Mammary epithelial cell (primary cell): ENCODE measurements at regions of chr3 and their contacts with region 1.

Region 1: DNA sequence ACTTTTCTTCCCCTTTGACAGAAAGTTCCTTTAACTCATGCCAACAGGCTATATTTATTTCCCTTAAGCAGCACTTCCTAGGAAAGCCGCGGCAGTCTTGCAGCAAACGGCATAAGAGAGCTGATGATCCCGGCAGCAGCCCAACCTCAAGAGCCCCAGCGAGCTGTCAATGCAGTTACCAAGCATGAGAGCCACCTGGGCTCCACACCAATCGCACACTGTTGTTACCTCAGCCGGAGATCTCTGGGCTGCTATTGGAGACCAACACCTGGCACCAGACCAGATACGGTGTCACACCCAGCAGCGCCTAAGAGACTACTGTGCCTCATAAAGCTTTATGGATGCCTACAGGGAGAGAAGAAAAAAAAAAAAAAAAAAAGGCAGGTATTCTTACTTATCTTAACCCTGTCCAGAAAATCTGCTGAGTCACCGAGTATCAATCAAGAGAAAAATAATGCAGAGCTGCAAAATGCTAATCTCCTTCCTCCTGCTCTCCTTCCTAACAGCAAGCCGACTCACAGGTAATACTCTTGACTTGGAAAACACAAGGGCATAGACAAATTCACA is 11.7 kb downstream of the ABCC5 start:
- DNase-seq: peak; percentile 96
- H3K4me3 ChIP-seq: peak overlapping the region in 2 of 3 experiments; percentile 2 to 24
- H3K27ac ChIP-seq: peak overlapping the region; percentile 58
- H3K4me1 ChIP-seq: peaks cover 16% of the 10 kb centered on the region
- H3K27me3 ChIP-seq: no peaks in the 10 kb centered on the region
- CTCF ChIP-seq: no peak

Region 2: DNA sequence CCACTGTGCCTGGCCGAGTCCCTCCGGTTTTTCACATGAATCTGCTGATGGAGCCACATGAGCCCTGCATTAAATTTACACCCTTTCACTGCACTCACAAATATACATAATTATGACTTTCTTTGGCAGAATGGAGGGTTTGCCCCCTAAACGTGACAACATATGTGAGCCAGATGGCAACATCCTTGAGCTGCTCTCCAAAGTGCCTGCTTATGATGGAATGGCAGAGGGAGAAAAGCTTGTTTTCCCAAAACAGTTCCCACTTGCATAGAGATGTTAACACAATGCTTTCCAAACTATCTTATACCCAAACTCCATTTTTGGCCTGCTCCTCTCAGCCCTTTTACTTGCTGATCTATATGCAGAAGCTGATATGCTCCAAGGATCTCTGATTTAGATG is 43.2 kb before region 1 on chr3:
- CTCF ChIA-PET with region 1: no interaction called
- dilution Hi-C with region 1: loop called (anchors 5 kb)
- in situ Hi-C with region 1: no loop called
- intact Hi-C with region 1: no loop called
- DNase-seq: no peak
- H3K4me3 ChIP-seq: no peak overlapping the region
- H3K27ac ChIP-seq: no peak overlapping the region
- H3K4me1 ChIP-seq: peaks cover 12% of the 10 kb centered on the region
- H3K27me3 ChIP-seq: no peaks in the 10 kb centered on the region
- CTCF ChIP-seq: no peak

Region 3: DNA sequence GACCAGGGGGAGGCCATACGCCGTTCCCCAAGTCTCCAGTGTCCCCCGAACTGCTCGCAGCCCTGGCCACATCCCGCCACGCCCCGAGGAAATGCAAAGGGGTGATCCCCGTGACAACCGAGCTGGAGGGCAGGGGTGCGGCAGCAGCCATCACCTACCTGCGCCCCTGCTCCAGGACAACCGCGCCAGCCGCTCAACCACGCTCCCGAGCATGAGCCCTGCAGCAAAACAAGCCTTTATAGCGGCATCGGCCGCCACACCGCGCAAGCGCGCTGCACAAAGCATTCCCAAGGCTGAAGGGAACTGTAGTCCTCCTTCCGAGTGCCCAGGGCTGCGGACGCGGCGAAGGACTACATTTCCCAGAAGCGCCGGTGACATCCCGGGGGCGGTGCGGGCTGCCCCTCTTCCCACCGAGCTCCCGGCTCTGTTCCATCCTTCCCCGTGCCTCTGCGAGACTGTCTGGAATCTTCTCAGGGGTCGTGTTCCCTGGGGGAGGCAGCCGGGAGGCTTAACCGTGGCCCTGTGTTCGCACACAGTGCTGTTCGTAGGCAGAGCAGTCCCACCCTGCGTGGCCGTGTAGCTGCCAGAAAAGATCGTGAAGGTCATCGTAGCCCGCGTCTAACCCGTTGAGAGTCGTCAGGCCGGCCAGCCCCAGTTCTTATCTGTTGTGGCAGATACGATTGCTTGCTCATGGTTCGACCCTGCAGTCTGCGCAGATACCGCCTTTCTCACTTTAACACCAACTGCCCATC is 11.8 kb after region 1 on chr3 and contains the start of gene ABCC5:
- CTCF ChIA-PET with region 1: interaction called, 5 read pairs
- dilution Hi-C with region 1: no loop called
- in situ Hi-C with region 1: no loop called
- intact Hi-C with region 1: loop called (anchors 1 kb)
- DNase-seq: peak; percentile 87
- H3K4me3 ChIP-seq: peak within 1 kb of the TSS; percentile 97 to 100 (median 100)
- H3K27ac ChIP-seq: peak within 1 kb of the TSS; percentile 35
- H3K4me1 ChIP-seq: peaks cover 17% of the 10 kb centered on the region
- H3K27me3 ChIP-seq: no peaks in the 10 kb centered on the region
- CTCF ChIP-seq: no peak
- total RNA-seq, gene ABCC5: 17.3 to 24.1 TPM

Region 4: GRCh38 chr3:184085389-184085852 is 79.4 kb after region 1 on chr3:
- CTCF ChIA-PET with region 1: no interaction called
- dilution Hi-C with region 1: no loop called
- in situ Hi-C with region 1: no loop called
- intact Hi-C with region 1: no loop called
- DNase-seq: peak; percentile 90
- H3K4me3 ChIP-seq: no peak overlapping the region
- H3K27ac ChIP-seq: no peak overlapping the region
- H3K4me1 ChIP-seq: peaks cover 8% of the 10 kb centered on the region
- H3K27me3 ChIP-seq: no peaks in the 10 kb centered on the region
- CTCF ChIP-seq: no peak

Region 5: GRCh38 chr3:184426681-184427141 is 420.7 kb after region 1 on chr3:
- CTCF ChIA-PET with region 1: no interaction called
- dilution Hi-C with region 1: no loop called
- in situ Hi-C with region 1: no loop called
- intact Hi-C with region 1: no loop called
- DNase-seq: peak; percentile 27
- H3K4me3 ChIP-seq: no peak overlapping the region
- H3K27ac ChIP-seq: no peak overlapping the region
- H3K4me1 ChIP-seq: peaks cover 5% of the 10 kb centered on the region
- H3K27me3 ChIP-seq: peaks cover 3% of the 10 kb centered on the region
- CTCF ChIP-seq: no peak